ENCODE measurements at regions of chr9 and their contacts with region 1.

Region 1: GRCh38 chr9:98998441-98999151 is 54.9 kb downstream of the COL15A1 start:
- DNase-seq: peak; percentile 61
- ATAC-seq: peak; percentile 62
- H3K4me3 ChIP-seq: no peak overlapping the region
- H3K4me3 Mint-ChIP-seq: no peak overlapping the region
- H3K27ac ChIP-seq: no peak overlapping the region
- H3K27ac Mint-ChIP-seq: no peak overlapping the region
- H3K4me1 ChIP-seq: peaks cover 2 to 15% of the 10 kb centered on the region in 2 donors
- H3K4me1 Mint-ChIP-seq: peaks cover 14% of the 10 kb centered on the region
- H3K27me3 ChIP-seq: peaks cover 0 to 9% (median 0%) of the 10 kb centered on the region in 4 experiments
- H3K27me3 Mint-ChIP-seq: no peaks in the 10 kb centered on the region
- CTCF ChIP-seq: peak; percentile 81

Region 2: DNA sequence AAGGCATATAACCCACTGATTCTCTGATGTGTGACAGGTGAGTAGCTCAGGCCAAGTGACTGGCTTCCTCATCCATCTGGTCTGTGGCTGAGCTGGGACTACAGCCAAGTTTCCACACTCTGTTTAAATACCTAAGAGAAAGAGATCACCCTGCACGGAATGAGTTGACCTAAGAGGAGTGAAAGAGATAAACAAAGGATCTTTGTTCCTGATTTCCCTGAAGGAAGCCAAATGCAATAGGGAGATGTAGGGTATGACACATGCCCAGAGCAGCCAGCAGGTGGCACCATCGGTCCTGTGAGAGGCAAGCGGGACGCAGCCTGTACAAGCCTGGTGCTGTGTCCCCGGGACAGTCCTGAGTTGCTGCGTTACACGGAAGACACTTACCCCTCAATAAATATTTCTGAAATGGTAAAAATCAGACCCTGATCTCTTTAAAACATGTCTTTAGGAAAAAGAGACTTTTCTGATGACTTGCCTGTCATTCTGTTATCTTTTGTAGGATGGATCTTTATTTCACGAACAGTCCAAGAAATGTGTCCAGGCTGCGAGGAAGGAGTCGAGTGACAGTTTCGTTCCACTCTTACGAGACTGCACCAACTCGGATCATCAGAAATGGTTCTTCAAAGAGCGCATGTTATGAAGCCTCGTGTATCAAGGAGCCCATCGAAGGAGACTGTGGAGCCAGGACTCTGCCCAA is 150.0 kb before region 1 on chr9:
- CTCF ChIA-PET with region 1: interaction called, 14 read pairs
- POLR2A ChIA-PET with region 1: no interaction called
- intact Hi-C with region 1: loop called (anchors 2 kb)
- DNase-seq: peak; percentile 74
- ATAC-seq: peak; percentile 91
- H3K4me3 ChIP-seq: no peak overlapping the region
- H3K4me3 Mint-ChIP-seq: no peak overlapping the region
- H3K27ac ChIP-seq: no peak overlapping the region
- H3K27ac Mint-ChIP-seq: no peak overlapping the region
- H3K4me1 ChIP-seq: no peaks in the 10 kb centered on the region
- H3K4me1 Mint-ChIP-seq: no peaks in the 10 kb centered on the region
- H3K27me3 ChIP-seq: no peaks in the 10 kb centered on the region
- H3K27me3 Mint-ChIP-seq: no peaks in the 10 kb centered on the region
- CTCF ChIP-seq: peak; percentile 97

Region 3: DNA sequence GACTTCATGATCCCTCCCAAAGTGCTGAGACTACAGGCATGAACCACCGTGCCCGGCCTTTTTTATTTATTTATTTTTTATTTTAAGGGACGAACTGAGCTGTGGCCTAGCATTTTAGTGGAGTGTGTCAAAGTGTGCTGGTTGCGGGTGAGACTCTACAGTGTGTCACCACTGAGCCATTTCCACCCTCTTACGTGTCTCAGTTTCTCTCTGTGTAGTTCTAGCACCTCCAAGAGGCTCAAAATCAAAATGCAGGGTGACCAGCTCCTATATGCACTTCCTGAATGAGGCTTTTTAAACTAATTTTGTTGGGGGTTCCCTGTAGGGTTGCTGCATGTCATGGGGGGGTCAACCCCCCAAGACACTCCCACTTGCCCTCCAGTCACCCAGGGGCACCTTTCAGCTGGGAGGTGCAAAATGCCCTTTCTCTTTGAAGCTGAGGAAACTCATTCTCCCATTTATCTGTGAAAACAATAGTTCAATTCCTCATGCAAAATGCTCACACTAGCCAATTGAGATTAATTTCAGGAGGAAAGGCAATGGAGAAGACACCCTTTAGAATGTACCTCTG is 14.4 kb after region 1 on chr9:
- CTCF ChIA-PET with region 1: interaction called, 14 read pairs
- POLR2A ChIA-PET with region 1: no interaction called
- intact Hi-C with region 1: no loop called
- DNase-seq: no peak
- ATAC-seq: no peak
- H3K4me3 ChIP-seq: no peak overlapping the region
- H3K4me3 Mint-ChIP-seq: no peak overlapping the region
- H3K27ac ChIP-seq: no peak overlapping the region
- H3K27ac Mint-ChIP-seq: no peak overlapping the region
- H3K4me1 ChIP-seq: peaks cover 11 to 13% of the 10 kb centered on the region in 2 donors
- H3K4me1 Mint-ChIP-seq: peaks cover 11% of the 10 kb centered on the region
- H3K27me3 ChIP-seq: no peaks in the 10 kb centered on the region
- H3K27me3 Mint-ChIP-seq: no peaks in the 10 kb centered on the region
- CTCF ChIP-seq: no peak

Region 4: DNA sequence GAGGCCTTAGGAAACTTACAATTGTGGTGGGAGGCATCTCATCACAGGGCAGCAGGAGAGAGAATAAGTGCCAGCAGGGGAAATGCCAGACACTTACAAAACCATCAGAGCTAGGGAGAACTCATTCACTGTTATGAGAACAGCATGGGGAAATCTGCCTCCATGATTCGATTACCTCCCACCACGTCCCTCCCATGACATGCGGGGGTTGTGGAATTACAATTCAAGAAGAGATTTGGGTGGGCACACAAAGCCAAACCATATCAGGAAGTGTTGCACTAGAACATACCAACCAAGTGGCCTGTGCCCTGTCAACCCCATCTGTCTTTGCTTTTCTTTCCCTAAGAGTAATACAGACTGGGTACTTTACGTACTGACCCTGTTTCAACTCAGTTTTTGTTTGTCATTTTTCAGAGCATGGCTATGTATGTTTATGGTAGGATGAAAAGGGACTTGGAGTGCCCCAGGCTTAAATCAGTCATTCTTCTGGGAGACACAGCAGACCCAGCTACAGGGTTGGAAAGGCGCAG is 48.0 kb after region 1 on chr9:
- CTCF ChIA-PET with region 1: no interaction called
- POLR2A ChIA-PET with region 1: no interaction called
- intact Hi-C with region 1: no loop called
- DNase-seq: no peak
- ATAC-seq: no peak
- H3K4me3 ChIP-seq: no peak overlapping the region
- H3K4me3 Mint-ChIP-seq: no peak overlapping the region
- H3K27ac ChIP-seq: no peak overlapping the region
- H3K27ac Mint-ChIP-seq: no peak overlapping the region
- H3K4me1 ChIP-seq: no peaks in the 10 kb centered on the region
- H3K4me1 Mint-ChIP-seq: no peaks in the 10 kb centered on the region
- H3K27me3 ChIP-seq: no peaks in the 10 kb centered on the region
- H3K27me3 Mint-ChIP-seq: no peaks in the 10 kb centered on the region
- CTCF ChIP-seq: no peak

Region 5: DNA sequence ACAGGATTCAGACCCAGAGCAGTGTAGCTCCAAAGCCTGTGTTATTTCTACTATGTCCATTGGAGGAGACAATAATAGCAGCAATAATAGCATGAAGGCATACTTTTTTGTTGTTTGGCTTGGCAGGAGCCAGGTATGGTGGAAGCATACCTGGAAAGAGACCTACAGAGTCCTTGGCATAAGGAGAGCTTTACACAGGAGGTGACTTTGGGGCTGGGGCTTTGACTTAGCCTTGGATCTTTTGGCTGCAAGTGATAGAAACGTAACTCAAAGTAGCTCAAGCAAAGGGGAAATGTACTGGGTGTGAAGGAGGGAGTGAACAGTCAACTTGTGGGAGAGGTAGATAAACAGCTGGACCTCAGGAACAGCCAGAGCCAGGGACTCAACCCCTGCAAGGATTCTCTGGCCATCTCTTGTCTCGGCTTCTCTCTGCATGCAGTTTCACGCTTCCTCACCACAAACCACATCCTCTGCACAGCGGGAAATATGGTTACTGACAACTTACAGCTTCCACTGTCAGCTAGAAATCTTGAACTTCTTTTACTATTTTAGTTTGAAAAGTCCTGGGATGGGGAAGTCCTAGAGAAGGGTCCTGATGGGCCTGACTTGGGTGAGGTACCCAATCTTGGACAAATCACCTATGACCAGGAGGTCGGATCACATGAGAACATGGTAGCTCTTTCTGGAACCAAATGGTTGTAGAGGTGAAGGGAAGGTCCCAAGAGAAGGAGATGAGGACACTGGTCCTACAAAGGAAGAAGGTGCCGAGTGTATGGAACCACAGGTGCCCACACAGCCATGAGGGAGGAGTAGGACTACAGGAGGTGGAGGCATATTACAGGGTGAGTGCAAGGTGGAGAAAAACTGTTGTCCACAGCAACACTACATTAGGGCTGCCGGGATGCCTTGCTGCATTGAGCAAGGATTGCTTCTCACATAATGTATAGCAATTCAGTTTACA is 59.3 kb after region 1 on chr9:
- CTCF ChIA-PET with region 1: interaction called, 5 read pairs
- POLR2A ChIA-PET with region 1: no interaction called
- intact Hi-C with region 1: loop called (anchors 5 kb)
- DNase-seq: peak; percentile 72
- ATAC-seq: peak; percentile 52
- H3K4me3 ChIP-seq: peak overlapping the region; percentile 13 to 55 (median 23)
- H3K4me3 Mint-ChIP-seq: peak overlapping the region; percentile 86
- H3K27ac ChIP-seq: peak overlapping the region; percentile 57 to 75
- H3K27ac Mint-ChIP-seq: peak overlapping the region; percentile 88
- H3K4me1 ChIP-seq: peaks cover 54 to 66% of the 10 kb centered on the region in 2 donors
- H3K4me1 Mint-ChIP-seq: peaks cover 64% of the 10 kb centered on the region
- H3K27me3 ChIP-seq: no peaks in the 10 kb centered on the region
- H3K27me3 Mint-ChIP-seq: no peaks in the 10 kb centered on the region
- CTCF ChIP-seq: no peak

Region 6: GRCh38 chr9:99509065-99509745 is 510.6 kb after region 1 on chr9:
- CTCF ChIA-PET with region 1: no interaction called
- POLR2A ChIA-PET with region 1: no interaction called
- intact Hi-C with region 1: no loop called
- DNase-seq: no peak
- ATAC-seq: no peak
- H3K4me3 ChIP-seq: no peak overlapping the region
- H3K4me3 Mint-ChIP-seq: no peak overlapping the region
- H3K27ac ChIP-seq: no peak overlapping the region
- H3K27ac Mint-ChIP-seq: no peak overlapping the region
- H3K4me1 ChIP-seq: peaks cover 29 to 30% of the 10 kb centered on the region in 2 donors
- H3K4me1 Mint-ChIP-seq: peaks cover 40% of the 10 kb centered on the region
- H3K27me3 ChIP-seq: no peaks in the 10 kb centered on the region
- H3K27me3 Mint-ChIP-seq: no peaks in the 10 kb centered on the region
- CTCF ChIP-seq: no peak

Measured in B cell (primary cell).